Activated CD4-positive, alpha-beta memory T cell treated with anti-CD3 and anti-CD28 coated beads for 36 hours (primary cell): ENCODE measurements at regions of chr6 and their contacts with region 1.

Region 1: DNA sequence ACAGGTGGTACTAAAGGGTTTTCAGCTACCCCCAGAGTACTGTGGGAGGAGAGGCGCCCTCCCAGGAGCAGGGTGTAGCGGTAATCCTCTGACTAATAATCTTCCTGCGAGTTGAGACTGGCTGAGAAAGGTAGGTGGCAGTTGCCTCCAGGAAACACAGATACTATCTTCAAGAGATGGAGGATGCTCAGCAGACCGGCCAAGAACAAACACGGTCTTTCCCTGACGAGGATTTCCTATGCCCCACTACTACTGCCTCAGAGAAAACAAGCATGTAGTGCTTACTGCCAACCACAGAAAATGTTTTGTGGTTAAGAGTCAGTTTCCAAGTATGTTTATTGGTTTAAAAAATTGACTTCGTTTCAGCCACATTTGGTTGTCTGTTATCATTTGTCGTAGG is 26.8 kb downstream of the C6orf89 start:
- DNase-seq: peak; percentile 81
- H3K4me3 Mint-ChIP-seq: peak overlapping the region; percentile 27
- H3K27ac Mint-ChIP-seq: peak overlapping the region; percentile 70
- H3K4me1 Mint-ChIP-seq: peaks cover 51% of the 10 kb centered on the region
- H3K27me3 Mint-ChIP-seq: no peaks in the 10 kb centered on the region

Region 2: GRCh38 chr6:36368921-36369865 is 543.4 kb before region 1 on chr6:
- CTCF ChIA-PET with region 1: no interaction called
- POLR2A ChIA-PET with region 1: no interaction called
- intact Hi-C with region 1: no loop called
- DNase-seq: no peak
- H3K4me3 Mint-ChIP-seq: no peak overlapping the region
- H3K27ac Mint-ChIP-seq: no peak overlapping the region
- H3K4me1 Mint-ChIP-seq: peaks cover 5% of the 10 kb centered on the region
- H3K27me3 Mint-ChIP-seq: no peaks in the 10 kb centered on the region

Region 3: GRCh38 chr6:36867471-36868224 is 44.9 kb before region 1 on chr6:
- CTCF ChIA-PET with region 1: no interaction called
- POLR2A ChIA-PET with region 1: no interaction called
- intact Hi-C with region 1: loop called (anchors 1 kb)
- DNase-seq: no peak
- H3K4me3 Mint-ChIP-seq: no peak overlapping the region
- H3K27ac Mint-ChIP-seq: no peak overlapping the region
- H3K4me1 Mint-ChIP-seq: peaks cover 76% of the 10 kb centered on the region
- H3K27me3 Mint-ChIP-seq: no peaks in the 10 kb centered on the region

Region 4: GRCh38 chr6:36885461-36886401 is 26.9 kb before region 1 on chr6 and contains the start of gene C6orf89:
- CTCF ChIA-PET with region 1: interaction called, 15 read pairs
- POLR2A ChIA-PET with region 1: interaction called, 11 read pairs
- intact Hi-C with region 1: loop called (anchors 1 kb)
- DNase-seq: peak; percentile 98
- H3K4me3 Mint-ChIP-seq: peak within 1 kb of the TSS; percentile 88
- H3K27ac Mint-ChIP-seq: peak within 1 kb of the TSS; percentile 92
- H3K4me1 Mint-ChIP-seq: peaks cover 36% of the 10 kb centered on the region
- H3K27me3 Mint-ChIP-seq: no peaks in the 10 kb centered on the region
- total RNA-seq, gene C6orf89: 29.2 to 29.8 TPM

Region 5: DNA sequence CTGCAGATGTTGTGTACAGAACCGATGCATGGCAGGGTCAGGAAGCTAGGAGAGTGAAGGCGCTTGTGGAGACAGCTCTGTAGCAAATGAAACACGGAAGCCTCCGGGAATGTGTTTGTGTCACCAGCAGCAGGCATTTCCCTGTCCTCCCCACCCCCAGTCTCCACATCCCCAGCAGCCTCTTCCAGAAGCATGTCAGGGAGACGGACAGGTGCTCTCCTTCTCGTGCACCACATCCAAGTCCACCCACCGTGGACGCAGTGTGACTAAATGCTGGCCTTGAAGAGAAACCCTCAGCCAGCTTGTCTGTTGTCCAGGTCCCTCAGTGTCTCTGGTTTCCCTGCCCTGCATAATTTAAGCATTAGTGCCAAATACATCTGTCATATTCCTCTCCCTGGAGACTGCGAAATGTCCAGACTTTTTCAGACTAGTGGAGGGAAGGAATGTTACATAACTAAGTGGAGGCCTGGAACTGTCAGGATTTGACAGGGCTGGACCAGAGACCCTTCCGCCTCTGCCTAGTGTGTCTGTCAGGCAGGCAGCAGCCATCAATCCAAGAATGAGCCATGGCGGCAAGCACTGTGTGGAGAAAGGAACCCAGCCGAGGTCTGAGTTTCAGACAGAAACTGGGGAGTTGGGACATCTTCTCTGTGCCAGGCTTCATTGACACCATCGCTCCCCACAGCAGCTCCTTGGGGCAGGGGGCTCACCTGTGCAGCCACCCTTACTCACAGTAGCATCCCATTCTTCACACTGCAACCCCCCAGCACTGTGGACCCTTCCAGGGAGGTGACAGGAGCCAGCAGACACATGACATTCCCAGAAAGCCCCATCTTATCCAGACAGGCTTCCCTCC is 15.3 kb after region 1 on chr6:
- CTCF ChIA-PET with region 1: interaction called, 5 read pairs
- POLR2A ChIA-PET with region 1: no interaction called
- intact Hi-C with region 1: loop called (anchors 1 kb)
- DNase-seq: no peak
- H3K4me3 Mint-ChIP-seq: no peak overlapping the region
- H3K27ac Mint-ChIP-seq: no peak overlapping the region
- H3K4me1 Mint-ChIP-seq: peaks cover 25% of the 10 kb centered on the region
- H3K27me3 Mint-ChIP-seq: no peaks in the 10 kb centered on the region

Region 6: GRCh38 chr6:36954262-36954931 is 41.8 kb after region 1 on chr6 and contains the start of gene PI16:
- CTCF ChIA-PET with region 1: interaction called, 7 read pairs
- POLR2A ChIA-PET with region 1: no interaction called
- intact Hi-C with region 1: loop called (anchors 5 kb)
- DNase-seq: peak; percentile 21
- H3K4me3 Mint-ChIP-seq: peak within 1 kb of the TSS; percentile 51
- H3K27ac Mint-ChIP-seq: peak within 1 kb of the TSS; percentile 28
- H3K4me1 Mint-ChIP-seq: peaks cover 38% of the 10 kb centered on the region
- H3K27me3 Mint-ChIP-seq: no peaks in the 10 kb centered on the region
- total RNA-seq, gene PI16: 1.0 to 1.1 TPM

Region 7: GRCh38 chr6:36985808-36986703 is 73.5 kb after region 1 on chr6 and contains the start of gene MTCH1:
- CTCF ChIA-PET with region 1: interaction called, 3 read pairs
- POLR2A ChIA-PET with region 1: interaction called, 6 read pairs
- intact Hi-C with region 1: loop called (anchors 1 kb)
- DNase-seq: peak; percentile 90
- H3K4me3 Mint-ChIP-seq: peak within 1 kb of the TSS; percentile 99
- H3K27ac Mint-ChIP-seq: peak within 1 kb of the TSS; percentile 90
- H3K4me1 Mint-ChIP-seq: peaks cover 18% of the 10 kb centered on the region
- H3K27me3 Mint-ChIP-seq: no peaks in the 10 kb centered on the region
- total RNA-seq, gene MTCH1: 109 to 114 TPM

Region 8: GRCh38 chr6:37239950-37240713 is 327.5 kb after region 1 on chr6:
- CTCF ChIA-PET with region 1: no interaction called
- POLR2A ChIA-PET with region 1: no interaction called
- intact Hi-C with region 1: loop called (anchors 1 kb)
- DNase-seq: peak; percentile 91
- H3K4me3 Mint-ChIP-seq: peak overlapping the region; percentile 2
- H3K27ac Mint-ChIP-seq: peak overlapping the region; percentile 88
- H3K4me1 Mint-ChIP-seq: peaks cover 41% of the 10 kb centered on the region
- H3K27me3 Mint-ChIP-seq: no peaks in the 10 kb centered on the region